Natural killer cell (primary cell): ENCODE measurements at regions of chr1 and their contacts with region 1.

Region 1: GRCh38 chr1:150067184-150068036 is at the start of gene VPS45:
- DNase-seq: peak; percentile 68 to 86
- ATAC-seq: peak; percentile 89 to 93 (median 90)
- H3K4me3 ChIP-seq: peak within 1 kb of the TSS; percentile 89
- H3K4me3 Mint-ChIP-seq: peak within 1 kb of the TSS; percentile 97
- H3K27ac ChIP-seq: peak within 1 kb of the TSS; percentile 74
- H3K27ac Mint-ChIP-seq: peak within 1 kb of the TSS; percentile 91 to 94
- H3K4me1 ChIP-seq: peaks cover 11% of the 10 kb centered on the region
- H3K4me1 Mint-ChIP-seq: peaks cover 28 to 37% of the 10 kb centered on the region in 2 donors
- H3K27me3 ChIP-seq: no peaks in the 10 kb centered on the region
- H3K27me3 Mint-ChIP-seq: no peaks in the 10 kb centered on the region
- CTCF ChIP-seq: peak; percentile 26
- total RNA-seq, gene VPS45: 28.8 to 41.1 (median 33.0) TPM

Region 2: DNA sequence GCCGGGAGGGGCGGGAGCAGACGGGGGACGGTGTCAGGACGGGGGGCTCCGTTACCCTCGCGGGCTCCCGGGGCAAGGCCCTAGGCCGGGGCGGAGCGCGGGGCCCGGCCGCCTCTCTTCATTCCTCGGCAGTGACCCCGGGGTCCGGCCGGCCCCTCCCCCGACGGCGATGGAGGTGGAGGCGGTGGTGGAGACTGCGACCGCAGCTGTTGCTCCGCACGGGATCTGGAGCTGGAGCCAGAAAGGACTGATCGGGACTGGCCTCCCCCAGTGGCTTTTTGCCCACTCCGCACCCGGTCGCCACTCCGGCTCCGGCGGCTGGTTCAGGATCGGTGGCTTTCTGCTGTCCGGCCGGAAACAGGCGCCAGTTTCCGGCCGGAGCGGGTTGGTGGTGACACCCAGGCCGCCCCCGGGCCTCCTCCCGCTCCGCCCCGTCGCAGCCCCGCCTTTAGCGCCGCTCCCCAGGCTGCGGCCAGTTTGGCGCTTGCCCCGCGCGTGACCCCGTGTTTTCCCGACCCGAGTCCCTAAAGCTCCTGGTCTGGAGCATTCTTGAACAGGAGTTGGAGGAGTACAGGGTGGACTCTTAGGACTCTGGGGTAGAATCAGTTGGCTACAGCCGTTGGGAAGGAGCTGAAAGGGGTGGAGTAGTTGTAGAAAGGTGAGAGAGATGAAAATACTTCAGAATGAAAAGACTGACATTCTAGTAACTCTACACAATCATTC is 56.9 kb before region 1 on chr1 and contains the start of gene OTUD7B:
- intact Hi-C with region 1: loop called (anchors 5 kb)
- DNase-seq: peak; percentile 72 to 75
- ATAC-seq: peak; percentile 90 to 94 (median 92)
- H3K4me3 ChIP-seq: peak within 1 kb of the TSS; percentile 92
- H3K4me3 Mint-ChIP-seq: peak within 1 kb of the TSS; percentile 98
- H3K27ac ChIP-seq: peak within 1 kb of the TSS; percentile 64
- H3K27ac Mint-ChIP-seq: peak within 1 kb of the TSS; percentile 79 to 96
- H3K4me1 ChIP-seq: peaks cover 8% of the 10 kb centered on the region
- H3K4me1 Mint-ChIP-seq: peaks cover 35 to 43% of the 10 kb centered on the region in 2 donors
- H3K27me3 ChIP-seq: no peaks in the 10 kb centered on the region
- H3K27me3 Mint-ChIP-seq: no peaks in the 10 kb centered on the region
- CTCF ChIP-seq: no peak
- total RNA-seq, gene OTUD7B: 10.6 to 19.6 (median 12.3) TPM

Region 3: DNA sequence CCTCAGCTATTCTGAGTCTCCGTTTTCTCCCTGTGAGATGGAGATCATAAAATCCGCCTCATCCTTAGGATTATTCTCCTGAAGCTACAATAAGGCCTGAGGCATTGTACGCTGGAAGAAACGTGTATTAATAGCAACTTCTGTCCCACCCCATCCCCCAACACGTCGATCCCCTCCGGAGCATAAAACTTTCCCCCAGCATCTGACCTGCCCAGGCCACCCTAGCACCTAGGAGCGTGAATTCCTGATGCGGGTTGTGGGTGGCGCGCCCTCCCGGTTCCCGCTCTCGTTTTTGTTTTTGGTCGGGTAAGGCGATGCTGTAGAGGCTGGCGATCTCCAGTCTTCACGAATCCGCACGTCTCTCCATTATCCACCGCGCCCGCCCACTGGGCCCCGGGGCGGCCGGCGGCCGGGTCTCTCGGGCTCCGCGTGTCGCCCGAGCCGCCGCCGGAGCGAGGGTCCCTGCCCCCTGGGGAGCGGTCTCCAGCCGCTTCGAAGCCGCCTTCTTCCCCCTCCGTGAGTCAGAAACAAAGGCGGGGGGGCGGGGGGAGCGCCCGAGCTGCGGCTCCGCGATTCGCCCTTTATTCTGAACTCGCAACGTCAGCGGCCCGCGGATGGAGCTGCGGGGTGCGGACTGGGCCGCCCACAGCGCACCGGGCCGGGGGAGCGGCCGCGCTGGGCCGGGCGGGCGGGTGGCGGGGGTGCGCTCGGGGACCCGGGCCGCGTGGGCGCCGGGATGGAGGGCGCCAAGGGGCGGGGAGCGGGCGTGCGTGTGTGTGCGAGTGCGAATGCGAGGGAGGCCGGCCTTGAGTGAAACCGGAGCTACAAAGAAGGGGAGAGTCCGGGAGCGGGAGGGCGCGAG is 82.1 kb after region 1 on chr1 and contains the start of gene PLEKHO1:
- intact Hi-C with region 1: loop called (anchors 5 kb)
- DNase-seq: peak; percentile 71 to 89
- ATAC-seq: peak; percentile 70 to 83 (median 76)
- H3K4me3 ChIP-seq: peak within 1 kb of the TSS; percentile 79
- H3K4me3 Mint-ChIP-seq: peak within 1 kb of the TSS; percentile 96
- H3K27ac ChIP-seq: peak within 1 kb of the TSS; percentile 79
- H3K27ac Mint-ChIP-seq: peak within 1 kb of the TSS; percentile 88 to 95
- H3K4me1 ChIP-seq: peaks cover 32% of the 10 kb centered on the region
- H3K4me1 Mint-ChIP-seq: peaks cover 32 to 47% of the 10 kb centered on the region in 2 donors
- H3K27me3 ChIP-seq: no peaks in the 10 kb centered on the region
- H3K27me3 Mint-ChIP-seq: no peaks in the 10 kb centered on the region
- CTCF ChIP-seq: no peak
- total RNA-seq, gene PLEKHO1: 53.3 to 73.8 (median 64.6) TPM

Region 4: GRCh38 chr1:150168960-150169601 is 101.7 kb after region 1 on chr1:
- intact Hi-C with region 1: loop called (anchors 1 kb)
- DNase-seq: peak; percentile 61 to 71
- ATAC-seq: peak; percentile 68 to 84 (median 77)
- H3K4me3 ChIP-seq: no peak overlapping the region
- H3K4me3 Mint-ChIP-seq: no peak overlapping the region
- H3K27ac ChIP-seq: no peak overlapping the region
- H3K27ac Mint-ChIP-seq: no peak overlapping the region
- H3K4me1 ChIP-seq: peaks cover 14% of the 10 kb centered on the region
- H3K4me1 Mint-ChIP-seq: no peaks in the 10 kb centered on the region
- H3K27me3 ChIP-seq: no peaks in the 10 kb centered on the region
- H3K27me3 Mint-ChIP-seq: peaks cover 0 to 2% of the 10 kb centered on the region in 2 donors
- CTCF ChIP-seq: peak; percentile 55

Region 5: DNA sequence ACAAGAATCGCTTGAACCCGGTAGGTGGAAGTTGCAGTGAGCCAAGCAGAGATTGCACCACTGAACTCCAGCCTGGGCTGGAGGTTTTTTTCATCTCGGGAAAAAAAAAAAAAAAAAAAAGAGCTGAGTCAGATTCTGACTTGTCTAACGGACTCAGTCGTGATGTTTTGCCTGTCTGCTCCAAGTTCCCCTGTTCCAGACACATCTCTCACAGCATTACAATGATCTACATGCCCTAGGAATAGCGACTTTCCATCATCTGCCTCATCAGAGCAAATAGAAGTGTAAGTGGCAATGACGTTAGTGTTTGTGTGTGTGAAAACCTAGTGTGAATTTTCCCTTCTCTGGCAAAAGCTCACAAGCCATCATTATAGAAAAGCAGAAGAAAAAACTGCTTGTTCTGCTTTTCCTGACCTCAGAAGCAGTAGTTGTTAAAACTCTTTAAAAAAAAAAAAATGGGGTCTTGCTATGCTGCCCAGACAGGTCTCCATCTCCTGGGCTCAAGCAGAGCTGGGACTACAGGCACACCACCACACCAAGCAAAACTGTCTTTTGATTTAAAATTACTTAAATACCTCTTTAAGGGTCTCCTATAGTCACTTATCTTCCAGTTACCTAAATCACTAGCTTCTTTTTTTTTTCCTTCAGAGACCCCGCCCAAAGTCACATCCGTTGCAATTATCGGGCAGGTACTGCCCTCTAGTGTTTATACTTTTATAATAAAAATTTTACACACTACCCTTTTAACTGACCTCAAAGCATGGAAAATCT is 119.6 kb after region 1 on chr1:
- intact Hi-C with region 1: loop called (anchors 2 kb)
- DNase-seq: peak; percentile 29 to 76
- ATAC-seq: peak; percentile 81 to 86 (median 82)
- H3K4me3 ChIP-seq: no peak overlapping the region
- H3K4me3 Mint-ChIP-seq: peak overlapping the region; percentile 69
- H3K27ac ChIP-seq: peak overlapping the region; percentile 50
- H3K27ac Mint-ChIP-seq: peak overlapping the region; percentile 85
- H3K4me1 ChIP-seq: peaks cover 17% of the 10 kb centered on the region
- H3K4me1 Mint-ChIP-seq: peaks cover 12 to 13% of the 10 kb centered on the region in 2 donors
- H3K27me3 ChIP-seq: no peaks in the 10 kb centered on the region
- H3K27me3 Mint-ChIP-seq: no peaks in the 10 kb centered on the region
- CTCF ChIP-seq: peak; percentile 63